ENCODE measurements at regions of chr5 and their contacts with region 1.

Region 1: GRCh38 chr5:138352071-138352721 is at the start of gene KDM3B:
- DNase-seq: peak; percentile 95
- CTCF ChIP-seq: peak; percentile 100

Region 2: DNA sequence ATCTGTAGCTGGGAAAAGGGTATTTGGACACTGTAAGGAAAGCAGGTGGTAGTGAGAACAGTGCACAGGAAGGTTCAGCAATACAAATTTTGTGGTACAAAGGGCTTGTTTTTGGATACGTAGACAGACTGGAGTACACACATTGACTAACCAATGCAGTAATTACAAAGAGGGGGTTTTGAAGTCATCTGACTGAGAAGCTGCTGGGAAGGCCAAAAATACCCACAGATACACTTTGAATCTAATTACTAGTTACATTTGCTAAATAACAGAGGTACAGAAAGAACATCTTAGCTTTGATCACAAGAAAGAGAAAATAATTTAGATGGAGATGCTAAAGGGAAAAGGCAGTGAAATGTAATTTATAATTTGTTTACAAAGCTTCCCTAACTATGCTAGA is 417.0 kb before region 1 on chr5:
- CTCF ChIA-PET with region 1: no interaction called
- POLR2A ChIA-PET with region 1: no interaction called
- DNase-seq: peak; percentile 27
- CTCF ChIP-seq: no peak

Region 3: GRCh38 chr5:138178516-138179276 is 173.5 kb before region 1 on chr5 and contains the starts of genes BRD8 and KIF20A:
- CTCF ChIA-PET with region 1: interaction called, 32 read pairs
- POLR2A ChIA-PET with region 1: no interaction called
- DNase-seq: peak; percentile 93
- CTCF ChIP-seq: no peak

Region 4: DNA sequence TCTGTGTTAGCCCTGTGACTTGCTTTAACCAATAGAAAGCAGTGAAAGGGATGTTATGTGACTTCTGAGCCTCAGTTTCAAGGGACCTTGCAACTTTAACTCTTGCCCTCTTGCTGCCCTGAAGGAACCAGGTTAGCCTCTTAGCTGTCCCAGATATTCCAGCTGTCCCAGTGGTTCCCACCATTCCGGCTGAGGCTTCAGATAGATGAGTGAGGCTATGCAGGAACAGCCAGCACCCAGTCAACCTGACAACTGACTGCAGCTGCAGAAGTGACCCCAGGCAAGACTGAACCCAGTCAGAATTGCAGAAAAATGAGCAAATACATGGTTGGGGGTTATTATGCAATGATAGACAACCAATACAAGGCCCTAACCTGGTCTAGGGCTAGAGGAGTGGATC is 128.7 kb before region 1 on chr5:
- CTCF ChIA-PET with region 1: interaction called, 14 read pairs
- POLR2A ChIA-PET with region 1: no interaction called
- DNase-seq: no peak
- CTCF ChIP-seq: no peak

Region 5: GRCh38 chr5:138264183-138264582 is 88.0 kb before region 1 on chr5:
- CTCF ChIA-PET with region 1: interaction called, 10 read pairs
- POLR2A ChIA-PET with region 1: no interaction called
- DNase-seq: no peak
- CTCF ChIP-seq: no peak

Region 6: GRCh38 chr5:138337685-138338410 is 14.3 kb before region 1 on chr5 and contains the start of gene FAM53C:
- CTCF ChIA-PET with region 1: interaction called, 403 read pairs
- POLR2A ChIA-PET with region 1: interaction called, 166 read pairs
- DNase-seq: peak; percentile 91
- CTCF ChIP-seq: peak; percentile 0

Region 7: GRCh38 chr5:138408023-138408422 is 55.8 kb after region 1 on chr5:
- CTCF ChIA-PET with region 1: interaction called, 22 read pairs
- POLR2A ChIA-PET with region 1: no interaction called
- DNase-seq: peak; percentile 47
- CTCF ChIP-seq: no peak

Region 8: GRCh38 chr5:138824924-138825863 is 473.0 kb after region 1 on chr5:
- CTCF ChIA-PET with region 1: no interaction called
- POLR2A ChIA-PET with region 1: no interaction called
- DNase-seq: peak; percentile 56
- CTCF ChIP-seq: peak; percentile 40